ENCODE measurements at regions of chrX and their contacts with region 1.

Region 1: DNA sequence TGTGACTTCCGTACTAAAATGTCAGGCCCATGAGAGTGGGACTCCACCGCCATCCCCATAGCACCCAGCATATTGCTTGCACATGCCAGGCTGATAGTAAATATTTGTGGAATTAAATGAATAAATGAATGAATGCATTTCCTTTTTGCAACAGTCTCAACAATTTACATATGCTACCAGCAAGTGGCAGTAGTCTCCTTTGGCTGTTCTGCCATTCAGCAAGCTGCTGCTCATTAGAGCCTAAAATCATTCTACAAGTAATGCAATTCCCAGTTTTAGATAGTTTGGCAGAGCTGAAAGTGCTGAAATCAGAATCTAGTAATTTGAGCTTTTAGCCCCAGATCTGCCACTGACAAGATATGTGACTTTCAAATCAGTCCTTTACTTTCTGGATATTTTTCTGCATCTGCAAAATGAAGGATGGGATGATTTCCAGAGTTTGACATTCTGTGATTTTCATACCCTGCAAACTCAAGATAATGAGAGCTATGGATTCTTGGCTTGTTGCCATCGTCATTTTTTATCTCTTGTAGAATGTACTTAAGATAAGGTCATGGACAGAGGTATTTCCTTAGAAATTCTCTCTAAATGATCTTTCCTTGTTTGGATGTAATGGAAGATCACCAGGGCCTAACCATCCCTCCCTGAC is 35.7 kb upstream of the INTS6L start:
- DNase-seq: peak; percentile 24
- ATAC-seq: no peak
- H3K4me3 Mint-ChIP-seq: no peak overlapping the region
- H3K27ac Mint-ChIP-seq: no peak overlapping the region
- H3K4me1 Mint-ChIP-seq: no peaks in the 10 kb centered on the region
- H3K27me3 Mint-ChIP-seq: no peaks in the 10 kb centered on the region
- CTCF ChIP-seq: peak; percentile 57

Region 2: GRCh38 chrX:135396109-135396508 is 88.7 kb before region 1 on chrX:
- CTCF ChIA-PET with region 1: no interaction called
- POLR2A ChIA-PET with region 1: no interaction called
- intact Hi-C with region 1: no loop called
- DNase-seq: no peak
- ATAC-seq: peak; percentile 61
- H3K4me3 Mint-ChIP-seq: no peak overlapping the region
- H3K27ac Mint-ChIP-seq: no peak overlapping the region
- H3K4me1 Mint-ChIP-seq: peaks cover 2% of the 10 kb centered on the region
- H3K27me3 Mint-ChIP-seq: no peaks in the 10 kb centered on the region
- CTCF ChIP-seq: no peak

Region 3: DNA sequence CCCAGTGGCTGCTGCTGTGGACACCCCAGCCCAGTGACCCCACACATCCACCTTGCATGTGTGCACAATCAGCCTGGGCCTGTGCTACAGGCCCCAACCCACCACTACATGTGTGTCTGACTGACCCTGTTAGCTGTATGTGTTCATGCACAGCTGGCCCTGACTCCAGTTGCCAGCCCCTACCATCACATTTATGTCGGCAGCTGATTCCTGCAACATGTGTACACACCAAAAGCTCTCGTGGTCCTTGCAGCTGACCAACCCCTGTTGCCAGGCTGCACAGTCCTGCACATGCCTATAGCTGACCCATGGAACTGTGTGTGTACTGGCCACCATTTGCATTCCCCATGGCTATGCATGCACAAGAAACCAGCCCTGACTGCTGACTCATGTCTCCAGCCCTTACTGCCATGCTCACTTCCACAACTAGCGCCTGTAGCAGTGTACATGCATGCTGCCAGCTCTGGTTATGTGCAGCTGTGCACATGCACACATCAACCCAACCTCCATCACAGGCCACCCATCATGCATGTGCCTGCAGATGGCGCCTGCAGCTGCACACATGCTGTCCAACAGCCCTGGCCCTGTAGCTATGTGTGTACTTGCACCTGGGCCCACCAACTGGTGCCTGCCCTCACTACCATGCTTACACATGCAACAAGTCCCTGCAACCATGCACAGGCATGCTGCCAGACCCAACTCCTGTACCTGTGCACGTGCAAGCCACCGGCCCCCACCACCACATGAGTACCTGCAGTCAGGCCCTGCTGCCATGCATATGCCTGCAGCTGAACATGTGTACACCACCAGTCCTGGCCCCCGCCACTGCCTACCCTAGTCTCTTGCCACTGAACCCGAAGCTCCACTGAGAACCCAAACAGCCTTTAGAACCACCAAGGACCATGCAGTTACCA is 34.9 kb before region 1 on chrX:
- CTCF ChIA-PET with region 1: no interaction called
- POLR2A ChIA-PET with region 1: no interaction called
- intact Hi-C with region 1: no loop called
- DNase-seq: no peak
- ATAC-seq: no peak
- H3K4me3 Mint-ChIP-seq: no peak overlapping the region
- H3K27ac Mint-ChIP-seq: no peak overlapping the region
- H3K4me1 Mint-ChIP-seq: no peaks in the 10 kb centered on the region
- H3K27me3 Mint-ChIP-seq: no peaks in the 10 kb centered on the region
- CTCF ChIP-seq: no peak

Region 4: DNA sequence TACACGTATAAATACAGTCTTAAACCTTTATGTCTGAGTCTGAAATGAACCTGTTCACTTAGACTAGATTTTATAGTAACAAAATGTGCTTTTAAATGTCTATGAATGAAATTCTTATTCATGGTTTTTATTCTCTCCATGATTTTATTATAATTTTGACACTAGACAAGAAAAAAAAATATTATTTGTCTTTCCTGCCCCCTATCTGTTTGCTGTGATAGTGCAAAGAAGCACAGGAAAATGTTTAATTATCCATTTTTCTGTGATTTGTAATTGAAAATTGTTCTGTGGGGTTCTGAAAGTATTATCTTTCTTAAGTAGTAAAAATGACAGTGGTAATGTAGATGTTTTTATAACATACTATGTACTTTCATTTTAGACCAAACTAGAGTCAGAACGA is 87.7 kb after region 1 on chrX:
- CTCF ChIA-PET with region 1: interaction called, 6 read pairs
- POLR2A ChIA-PET with region 1: no interaction called
- intact Hi-C with region 1: loop called (anchors 5 kb)
- DNase-seq: no peak
- ATAC-seq: no peak
- H3K4me3 Mint-ChIP-seq: no peak overlapping the region
- H3K27ac Mint-ChIP-seq: no peak overlapping the region
- H3K4me1 Mint-ChIP-seq: peaks cover 13% of the 10 kb centered on the region
- H3K27me3 Mint-ChIP-seq: no peaks in the 10 kb centered on the region
- CTCF ChIP-seq: peak; percentile 36

Region 5: DNA sequence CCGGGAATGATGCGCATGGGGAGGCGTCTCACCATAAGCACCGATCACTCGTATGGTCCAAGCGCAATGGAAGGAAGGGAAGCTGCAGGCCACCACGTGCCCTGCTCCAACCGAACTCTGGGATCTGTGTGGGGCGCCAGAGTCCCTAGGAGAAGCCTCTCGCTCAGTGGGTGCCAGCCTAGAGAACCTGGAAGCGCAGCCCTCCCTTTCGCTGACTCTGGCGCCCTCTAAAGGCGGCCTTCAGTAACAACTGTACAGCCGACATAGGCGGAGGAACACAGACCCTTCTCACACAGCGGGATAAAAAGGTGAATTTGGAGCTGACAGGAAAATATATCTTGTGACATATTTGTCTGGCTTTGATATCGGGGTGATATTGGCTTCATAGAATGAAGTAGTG is 111.7 kb after region 1 on chrX:
- CTCF ChIA-PET with region 1: interaction called, 5 read pairs
- POLR2A ChIA-PET with region 1: no interaction called
- intact Hi-C with region 1: loop called (anchors 5 kb)
- DNase-seq: peak; percentile 55
- ATAC-seq: peak; percentile 68
- H3K4me3 Mint-ChIP-seq: no peak overlapping the region
- H3K27ac Mint-ChIP-seq: no peak overlapping the region
- H3K4me1 Mint-ChIP-seq: no peaks in the 10 kb centered on the region
- H3K27me3 Mint-ChIP-seq: peaks cover 2% of the 10 kb centered on the region
- CTCF ChIP-seq: peak; percentile 66

Measured in activated CD8-positive, alpha-beta T cell treated with anti-CD3 and anti-CD28 coated beads for 36 hours (primary cell).